ENCODE measurements at regions of chr3 and their contacts with region 1.

Region 1: GRCh38 chr3:98039322-98040024 is 4.4 kb upstream of the GABRR3 start:
- DNase-seq: peak; percentile 71
- H3K4me3 Mint-ChIP-seq: peak overlapping the region; percentile 84
- H3K27ac Mint-ChIP-seq: peak overlapping the region; percentile 90
- H3K4me1 Mint-ChIP-seq: peaks cover 22% of the 10 kb centered on the region
- H3K27me3 Mint-ChIP-seq: peaks cover 27% of the 10 kb centered on the region

Region 2: GRCh38 chr3:97793420-97794019 is 246.0 kb before region 1 on chr3:
- intact Hi-C with region 1: loop called (anchors 1 kb)
- DNase-seq: peak; percentile 6
- H3K4me3 Mint-ChIP-seq: no peak overlapping the region
- H3K27ac Mint-ChIP-seq: no peak overlapping the region
- H3K4me1 Mint-ChIP-seq: no peaks in the 10 kb centered on the region
- H3K27me3 Mint-ChIP-seq: no peaks in the 10 kb centered on the region

Region 3: DNA sequence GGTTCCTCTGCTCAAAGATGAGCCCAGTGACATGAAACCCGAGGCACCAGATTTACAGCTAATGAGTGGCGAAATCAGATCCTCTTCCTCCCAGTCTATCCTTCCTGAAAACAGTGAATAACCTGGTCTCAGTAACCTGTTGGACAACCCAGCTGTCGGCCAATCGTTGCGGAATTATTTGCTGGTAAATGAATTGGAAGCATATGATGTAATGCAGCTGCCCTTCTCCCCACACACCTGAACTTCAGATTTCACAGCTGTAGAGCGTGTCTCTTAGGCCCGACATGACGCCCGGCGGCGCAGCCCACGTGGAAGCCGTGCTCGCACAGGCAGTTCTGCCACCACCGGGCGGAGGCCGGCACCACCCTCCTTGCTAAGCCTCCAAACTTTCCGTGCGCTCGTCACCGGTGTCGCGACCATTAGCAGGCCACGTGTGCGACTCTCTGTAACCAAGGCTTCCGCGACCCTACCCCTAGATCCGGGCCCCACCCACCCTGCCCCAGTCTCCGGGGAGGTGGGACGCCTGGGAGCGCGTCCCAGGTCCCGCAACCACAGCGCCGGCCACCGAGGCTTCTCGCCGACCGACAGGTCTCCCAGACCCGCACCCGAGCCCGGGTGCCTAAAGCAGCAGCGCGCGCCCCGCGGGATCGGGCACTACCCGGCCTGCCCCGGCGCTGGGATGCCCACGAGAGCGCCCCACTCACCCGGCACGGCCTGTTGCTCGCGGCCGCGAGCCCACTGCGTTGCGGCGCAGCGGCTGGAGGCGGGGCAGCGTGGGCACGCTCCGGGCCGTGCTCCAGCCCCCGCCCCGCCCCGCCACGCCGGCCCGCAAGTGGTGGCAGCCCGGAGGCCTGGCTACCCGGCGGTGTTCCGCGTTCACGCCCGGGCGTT is 67.6 kb before region 1 on chr3 and contains the start of gene RIOX2:
- intact Hi-C with region 1: loop called (anchors 2 kb)
- DNase-seq: peak; percentile 77
- H3K4me3 Mint-ChIP-seq: peak within 1 kb of the TSS; percentile 97
- H3K27ac Mint-ChIP-seq: peak within 1 kb of the TSS; percentile 99
- H3K4me1 Mint-ChIP-seq: peaks cover 92% of the 10 kb centered on the region
- H3K27me3 Mint-ChIP-seq: no peaks in the 10 kb centered on the region
- total RNA-seq, gene RIOX2: 85.4 and 90.9 TPM in 2 replicates

Region 4: DNA sequence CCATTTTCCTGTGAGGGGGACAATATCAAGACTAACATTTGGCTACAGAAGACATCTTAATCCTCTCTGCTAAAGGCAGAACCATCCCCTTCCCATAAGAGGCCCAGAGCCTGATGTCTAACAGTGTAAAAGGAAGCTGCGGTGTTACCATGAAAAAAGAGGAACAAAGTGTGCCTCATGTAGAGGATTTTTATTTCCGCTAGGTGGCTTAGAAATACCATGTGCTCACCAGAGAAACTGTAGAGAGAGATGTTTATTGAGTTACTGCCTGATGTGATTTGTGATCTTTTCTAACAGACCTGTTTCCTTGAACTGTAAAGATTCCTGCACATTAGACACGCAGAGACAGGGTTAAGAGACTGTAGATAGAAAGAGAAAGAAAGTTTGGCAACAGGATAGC is 149.1 kb after region 1 on chr3:
- intact Hi-C with region 1: loop called (anchors 5 kb)
- DNase-seq: no peak
- H3K4me3 Mint-ChIP-seq: no peak overlapping the region
- H3K27ac Mint-ChIP-seq: no peak overlapping the region
- H3K4me1 Mint-ChIP-seq: peaks cover 6% of the 10 kb centered on the region
- H3K27me3 Mint-ChIP-seq: peaks cover 2% of the 10 kb centered on the region

Region 5: GRCh38 chr3:98209244-98209643 is 169.8 kb after region 1 on chr3:
- intact Hi-C with region 1: no loop called
- DNase-seq: no peak
- H3K4me3 Mint-ChIP-seq: no peak overlapping the region
- H3K27ac Mint-ChIP-seq: no peak overlapping the region
- H3K4me1 Mint-ChIP-seq: no peaks in the 10 kb centered on the region
- H3K27me3 Mint-ChIP-seq: peaks cover 2% of the 10 kb centered on the region

Region 6: GRCh38 chr3:98540346-98540745 is 500.9 kb after region 1 on chr3:
- intact Hi-C with region 1: loop called (anchors 2 kb)
- DNase-seq: no peak
- H3K4me3 Mint-ChIP-seq: peak overlapping the region; percentile 41
- H3K27ac Mint-ChIP-seq: peak overlapping the region; percentile 76
- H3K4me1 Mint-ChIP-seq: peaks cover 75% of the 10 kb centered on the region
- H3K27me3 Mint-ChIP-seq: no peaks in the 10 kb centered on the region

Region 7: GRCh38 chr3:98817547-98818041 is 778.1 kb after region 1 on chr3:
- intact Hi-C with region 1: loop called (anchors 1 kb)
- DNase-seq: no peak
- H3K4me3 Mint-ChIP-seq: no peak overlapping the region
- H3K27ac Mint-ChIP-seq: no peak overlapping the region
- H3K4me1 Mint-ChIP-seq: no peaks in the 10 kb centered on the region
- H3K27me3 Mint-ChIP-seq: no peaks in the 10 kb centered on the region

Region 8: GRCh38 chr3:99817437-99818240 is 1778.2 kb after region 1 on chr3 and contains the start of gene CMSS1:
- intact Hi-C with region 1: loop called (anchors 10 kb)
- DNase-seq: peak; percentile 92
- H3K4me3 Mint-ChIP-seq: peak within 1 kb of the TSS; percentile 88
- H3K27ac Mint-ChIP-seq: peak within 1 kb of the TSS; percentile 90
- H3K4me1 Mint-ChIP-seq: peaks cover 35% of the 10 kb centered on the region
- H3K27me3 Mint-ChIP-seq: no peaks in the 10 kb centered on the region
- total RNA-seq, gene CMSS1: 108 and 121 TPM in 2 replicates

Measured in activated T-helper 1 cell treated with anti-CD3 and anti-CD28 coated beads, Interleukin-12 subunit alpha, Interleukin-12 subunit beta, Interleukin-2, Interleukin-4 antibody, amounts not matched to agents 30 ng/mL and 10 ng/mL and 1 ng/mL, durations not matched to agents 14 hours and 24 hours and 36 hours (primary cell).